Caco-2 (cell line): ENCODE measurements at regions of chr9 and their contacts with region 1.

Region 1: DNA sequence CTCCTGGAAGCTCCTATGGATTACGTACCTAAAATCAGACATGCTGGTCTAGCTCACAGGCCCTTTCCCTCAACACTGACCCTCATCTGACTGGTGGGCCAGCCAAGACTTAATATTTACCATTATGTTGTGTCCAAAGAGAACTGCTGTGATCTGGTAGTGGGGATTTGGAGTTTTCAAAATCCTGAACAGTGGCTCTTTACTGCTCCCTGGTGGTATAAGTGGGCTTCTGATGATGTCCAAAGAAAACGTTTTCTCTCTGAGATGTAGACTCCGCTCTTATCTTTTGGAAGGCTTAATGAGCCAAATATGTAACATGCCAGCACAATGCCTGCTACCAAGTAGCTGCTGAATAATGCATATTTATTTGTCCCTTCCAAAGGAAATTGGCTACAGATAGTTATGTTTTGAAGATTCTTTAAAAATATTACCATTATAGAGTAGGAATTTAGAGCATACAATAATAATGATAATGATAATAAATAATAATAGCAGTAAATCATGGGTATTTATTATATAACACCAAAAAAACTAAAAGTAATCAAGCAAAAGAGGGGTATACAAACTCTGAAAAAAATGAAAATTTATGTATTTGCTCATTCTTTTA is 406.6 kb upstream of the TNC start:
- DNase-seq: peak in 1 of 2 experiments; percentile 64
- H3K4me3 ChIP-seq: no peak overlapping the region
- H3K4me3 Mint-ChIP-seq: no peak overlapping the region
- H3K27ac Mint-ChIP-seq: no peak overlapping the region
- H3K4me1 ChIP-seq: no peaks in the 10 kb centered on the region; the same call in 1 of the 2 replicates
- H3K4me1 Mint-ChIP-seq: no peaks in the 10 kb centered on the region
- H3K27me3 ChIP-seq: no peaks in the 10 kb centered on the region
- H3K27me3 Mint-ChIP-seq: peaks cover 6% of the 10 kb centered on the region
- CTCF ChIP-seq: peak; percentile 62 to 68

Region 2: DNA sequence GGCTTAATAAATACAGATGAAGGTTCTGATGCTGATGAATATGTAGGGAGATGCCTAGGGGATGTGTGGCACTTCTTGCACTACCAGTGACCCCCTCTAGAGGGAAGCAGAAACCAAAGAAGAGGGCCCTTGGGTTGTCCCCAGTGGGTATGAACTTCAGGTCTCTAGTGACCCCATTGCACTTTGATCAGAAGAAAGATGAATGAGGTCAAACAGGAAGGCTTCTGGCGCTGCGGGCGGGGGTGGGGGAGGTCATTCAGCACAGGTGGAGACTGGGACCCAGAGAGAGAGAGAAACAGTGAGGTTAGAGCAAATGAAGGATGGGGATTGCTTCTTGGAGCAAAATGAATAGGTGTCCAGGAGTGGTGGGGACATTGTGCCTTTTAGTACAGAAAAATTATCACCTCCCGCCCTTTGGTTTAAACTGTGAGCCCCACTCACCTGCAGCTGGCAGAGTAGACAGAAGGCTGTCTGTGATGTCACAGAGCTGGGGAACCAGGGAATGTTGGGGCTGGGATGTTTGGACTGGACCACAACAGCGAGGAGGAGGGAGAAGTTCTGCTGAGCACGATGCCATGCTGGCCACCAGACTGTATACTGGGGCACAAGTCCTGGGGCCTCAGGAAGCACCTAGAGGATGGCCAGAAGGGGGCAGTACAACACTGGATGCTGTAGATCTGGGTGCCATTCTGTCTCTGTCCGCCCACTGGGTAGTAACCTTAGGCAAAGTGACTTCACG is 842.8 kb before region 1 on chr9 and contains the start of gene TEX48:
- CTCF ChIA-PET with region 1: no interaction called
- POLR2A ChIA-PET with region 1: no interaction called
- intact Hi-C with region 1: loop called (anchors 1 kb)
- DNase-seq: peak; percentile 73 to 83
- H3K4me3 ChIP-seq: no peak within 1 kb of the TSS
- H3K4me3 Mint-ChIP-seq: no peak within 1 kb of the TSS
- H3K27ac Mint-ChIP-seq: no peak within 1 kb of the TSS
- H3K4me1 ChIP-seq: no peaks in the 10 kb centered on the region; the same call in 1 of the 2 replicates
- H3K4me1 Mint-ChIP-seq: peaks cover 16% of the 10 kb centered on the region
- H3K27me3 ChIP-seq: no peaks in the 10 kb centered on the region
- H3K27me3 Mint-ChIP-seq: no peaks in the 10 kb centered on the region
- CTCF ChIP-seq: peak; percentile 80 to 86
- total RNA-seq, gene TEX48: not detected in 2 replicates

Region 3: GRCh38 chr9:114805670-114806525 is 718.7 kb before region 1 on chr9 and contains the start of gene TNFSF15:
- CTCF ChIA-PET with region 1: no interaction called
- POLR2A ChIA-PET with region 1: no interaction called
- intact Hi-C with region 1: loop called (anchors 10 kb)
- DNase-seq: peak; percentile 63 to 80
- H3K4me3 ChIP-seq: no peak within 1 kb of the TSS
- H3K4me3 Mint-ChIP-seq: peak within 1 kb of the TSS; percentile 56
- H3K27ac Mint-ChIP-seq: peak within 1 kb of the TSS; percentile 25
- H3K4me1 ChIP-seq: peaks cover 40% of the 10 kb centered on the region
- H3K4me1 Mint-ChIP-seq: peaks cover 29% of the 10 kb centered on the region
- H3K27me3 ChIP-seq: no peaks in the 10 kb centered on the region
- H3K27me3 Mint-ChIP-seq: peaks cover 6% of the 10 kb centered on the region
- CTCF ChIP-seq: no peak
- total RNA-seq, gene TNFSF15: 0.66 and 1.00 TPM in 2 replicates

Region 4: DNA sequence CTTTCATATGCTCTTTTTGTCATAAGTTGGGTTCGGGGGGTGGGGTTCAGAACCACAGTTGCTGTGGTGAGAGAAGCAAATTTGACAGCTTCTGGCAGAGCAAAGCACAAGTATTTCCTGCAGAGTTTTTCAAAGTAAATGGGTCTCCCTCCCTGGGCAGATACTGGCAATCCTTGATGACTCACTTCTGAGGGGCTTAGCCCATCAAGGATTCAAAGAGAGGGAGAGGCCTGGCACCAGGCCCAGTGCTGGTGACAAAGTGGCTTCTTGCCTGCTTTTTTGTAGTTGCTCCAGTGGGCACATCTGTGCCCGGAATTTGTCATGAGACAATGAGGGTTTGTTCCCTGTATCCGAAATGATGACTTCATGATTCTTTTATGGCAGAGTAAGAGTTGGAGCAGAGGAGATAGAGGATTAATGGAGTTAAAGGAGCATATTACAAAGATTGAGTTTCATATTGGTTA is 360.0 kb before region 1 on chr9:
- CTCF ChIA-PET with region 1: no interaction called
- POLR2A ChIA-PET with region 1: interaction called, 12 read pairs
- intact Hi-C with region 1: no loop called
- DNase-seq: no peak
- H3K4me3 ChIP-seq: no peak overlapping the region
- H3K4me3 Mint-ChIP-seq: no peak overlapping the region
- H3K27ac Mint-ChIP-seq: no peak overlapping the region
- H3K4me1 ChIP-seq: no peaks in the 10 kb centered on the region
- H3K4me1 Mint-ChIP-seq: no peaks in the 10 kb centered on the region
- H3K27me3 ChIP-seq: no peaks in the 10 kb centered on the region
- H3K27me3 Mint-ChIP-seq: no peaks in the 10 kb centered on the region
- CTCF ChIP-seq: no peak

Region 5: DNA sequence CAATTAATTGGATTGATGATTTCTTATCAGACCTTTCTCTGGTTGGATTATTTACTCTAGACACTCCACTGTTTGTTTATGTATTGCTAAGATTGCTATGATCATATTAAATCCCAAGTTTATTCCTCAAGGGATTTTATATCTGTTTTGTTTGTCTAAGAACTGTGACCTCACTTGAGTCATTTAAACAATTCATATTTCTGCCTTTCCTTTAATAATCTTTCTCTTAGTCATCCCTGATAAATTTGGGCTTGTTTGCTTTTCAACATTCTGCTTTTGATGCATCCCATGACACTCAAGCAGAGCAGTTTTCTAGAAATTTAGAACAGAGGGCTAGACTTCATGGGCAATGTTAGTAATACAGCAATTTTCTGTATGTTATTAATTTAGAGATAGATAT is 175.0 kb before region 1 on chr9:
- CTCF ChIA-PET with region 1: no interaction called
- POLR2A ChIA-PET with region 1: no interaction called
- intact Hi-C with region 1: no loop called
- DNase-seq: no peak
- H3K4me3 ChIP-seq: no peak overlapping the region
- H3K4me3 Mint-ChIP-seq: no peak overlapping the region
- H3K27ac Mint-ChIP-seq: no peak overlapping the region
- H3K4me1 ChIP-seq: peaks cover 5% of the 10 kb centered on the region; the same call in 1 of the 2 replicates
- H3K4me1 Mint-ChIP-seq: no peaks in the 10 kb centered on the region
- H3K27me3 ChIP-seq: no peaks in the 10 kb centered on the region
- H3K27me3 Mint-ChIP-seq: no peaks in the 10 kb centered on the region
- CTCF ChIP-seq: no peak

Region 6: DNA sequence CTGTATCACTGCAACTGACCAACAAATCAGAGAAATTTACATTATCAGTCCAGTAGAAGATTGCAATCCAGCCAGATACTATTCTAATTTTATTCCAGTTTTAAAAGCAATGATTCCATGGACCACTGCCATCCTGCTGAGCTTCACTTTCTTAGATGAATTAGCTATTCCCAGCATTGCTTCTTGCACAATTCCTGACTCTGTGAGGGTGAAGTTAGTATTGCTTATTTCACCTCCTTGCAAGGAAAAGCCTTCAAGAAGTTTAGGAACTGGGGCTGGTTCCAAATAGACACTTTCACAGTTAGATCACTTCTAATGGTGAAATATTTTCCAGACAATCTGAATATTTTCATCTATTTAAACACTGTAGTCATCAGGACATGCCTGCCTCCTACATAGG is 68.0 kb before region 1 on chr9:
- CTCF ChIA-PET with region 1: no interaction called
- POLR2A ChIA-PET with region 1: no interaction called
- intact Hi-C with region 1: loop called (anchors 2 kb)
- DNase-seq: no peak
- H3K4me3 ChIP-seq: no peak overlapping the region
- H3K4me3 Mint-ChIP-seq: no peak overlapping the region
- H3K27ac Mint-ChIP-seq: no peak overlapping the region
- H3K4me1 ChIP-seq: no peaks in the 10 kb centered on the region
- H3K4me1 Mint-ChIP-seq: no peaks in the 10 kb centered on the region
- H3K27me3 ChIP-seq: no peaks in the 10 kb centered on the region
- H3K27me3 Mint-ChIP-seq: peaks cover 7% of the 10 kb centered on the region
- CTCF ChIP-seq: no peak